ENCODE measurements at regions of chr9 and their contacts with region 1.

Region 1: GRCh38 chr9:88052321-88052965 is 78.1 kb upstream of the CDK20 start:
- DNase-seq: no peak
- ATAC-seq: no peak
- H3K4me3 Mint-ChIP-seq: no peak overlapping the region
- H3K27ac Mint-ChIP-seq: no peak overlapping the region
- H3K4me1 Mint-ChIP-seq: peaks cover 15% of the 10 kb centered on the region
- H3K27me3 Mint-ChIP-seq: peaks cover 12% of the 10 kb centered on the region

Region 2: DNA sequence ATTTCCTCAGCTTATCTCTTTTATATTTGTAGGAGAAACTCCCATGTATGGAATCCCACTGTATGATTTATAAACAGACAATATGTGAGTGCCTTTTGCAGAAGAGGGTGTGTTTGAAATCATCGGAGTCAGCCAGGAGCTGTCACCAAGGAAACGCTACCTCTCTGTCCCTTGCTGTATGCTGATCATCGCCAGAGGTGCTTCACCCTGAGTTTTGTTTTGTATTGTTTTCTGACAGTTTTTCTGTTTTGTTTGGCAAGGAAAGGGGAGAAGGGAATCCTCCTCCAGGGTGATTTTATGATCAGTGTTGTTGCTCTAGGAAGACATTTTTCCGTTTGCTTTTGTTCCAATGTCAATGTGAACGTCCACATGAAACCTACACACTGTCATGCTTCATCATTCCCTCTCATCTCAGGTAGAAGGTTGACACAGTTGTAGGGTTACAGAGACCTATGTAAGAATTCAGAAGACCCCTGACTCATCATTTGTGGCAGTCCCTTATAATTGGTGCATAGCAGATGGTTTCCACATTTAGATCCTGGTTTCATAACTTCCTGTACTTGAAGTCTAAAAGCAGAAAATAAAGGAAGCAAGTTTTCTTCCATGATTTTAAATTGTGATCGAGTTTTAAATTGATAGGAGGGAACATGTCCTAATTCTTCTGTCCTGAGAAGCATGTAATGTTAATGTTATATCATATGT is 344.5 kb before region 1 on chr9:
- CTCF ChIA-PET with region 1: no interaction called
- POLR2A ChIA-PET with region 1: no interaction called
- intact Hi-C with region 1: loop called in 1 of 2 experiments (anchors 2 kb)
- DNase-seq: peak; percentile 31
- ATAC-seq: peak; percentile 40
- H3K4me3 Mint-ChIP-seq: no peak overlapping the region
- H3K27ac Mint-ChIP-seq: no peak overlapping the region
- H3K4me1 Mint-ChIP-seq: peaks cover 44% of the 10 kb centered on the region
- H3K27me3 Mint-ChIP-seq: peaks cover 5% of the 10 kb centered on the region

Region 3: GRCh38 chr9:87973730-87974292 is 78.6 kb before region 1 on chr9:
- CTCF ChIA-PET with region 1: interaction called, 4 read pairs
- POLR2A ChIA-PET with region 1: interaction called, 4 read pairs
- intact Hi-C with region 1: loop called in 1 of 2 experiments (anchors 1 kb)
- DNase-seq: peak; percentile 19
- ATAC-seq: no peak
- H3K4me3 Mint-ChIP-seq: peak overlapping the region; percentile 82
- H3K27ac Mint-ChIP-seq: peak overlapping the region; percentile 58
- H3K4me1 Mint-ChIP-seq: peaks cover 22% of the 10 kb centered on the region
- H3K27me3 Mint-ChIP-seq: no peaks in the 10 kb centered on the region

Region 4: GRCh38 chr9:88076286-88077090 is 24.0 kb after region 1 on chr9:
- CTCF ChIA-PET with region 1: no interaction called
- POLR2A ChIA-PET with region 1: no interaction called
- intact Hi-C with region 1: no loop called
- DNase-seq: peak; percentile 68
- ATAC-seq: peak; percentile 72
- H3K4me3 Mint-ChIP-seq: peak overlapping the region; percentile 66
- H3K27ac Mint-ChIP-seq: no peak overlapping the region
- H3K4me1 Mint-ChIP-seq: peaks cover 6% of the 10 kb centered on the region
- H3K27me3 Mint-ChIP-seq: peaks cover 49% of the 10 kb centered on the region

Region 5: DNA sequence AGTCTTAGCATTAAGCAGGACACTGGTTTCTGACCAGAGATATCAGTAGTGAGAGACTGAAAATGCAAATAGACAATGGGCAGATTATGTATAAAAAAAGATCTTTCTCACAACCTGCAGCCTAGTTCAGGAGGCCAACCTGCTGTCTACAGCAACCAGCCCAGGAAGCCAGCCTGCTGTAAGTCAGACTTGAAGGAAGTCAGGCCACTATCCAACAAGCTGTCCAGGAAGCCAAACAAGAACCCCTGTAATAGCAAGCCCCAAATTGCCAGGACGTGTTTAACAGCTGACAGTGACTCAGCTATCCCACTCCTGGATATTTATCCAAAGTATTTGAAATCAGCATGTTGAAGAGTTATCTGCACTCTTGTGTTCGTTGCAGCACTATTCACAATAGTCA is 214.0 kb after region 1 on chr9:
- CTCF ChIA-PET with region 1: no interaction called
- POLR2A ChIA-PET with region 1: no interaction called
- intact Hi-C with region 1: no loop called
- DNase-seq: no peak
- ATAC-seq: no peak
- H3K4me3 Mint-ChIP-seq: no peak overlapping the region
- H3K27ac Mint-ChIP-seq: no peak overlapping the region
- H3K4me1 Mint-ChIP-seq: peaks cover 3% of the 10 kb centered on the region
- H3K27me3 Mint-ChIP-seq: no peaks in the 10 kb centered on the region

Region 6: DNA sequence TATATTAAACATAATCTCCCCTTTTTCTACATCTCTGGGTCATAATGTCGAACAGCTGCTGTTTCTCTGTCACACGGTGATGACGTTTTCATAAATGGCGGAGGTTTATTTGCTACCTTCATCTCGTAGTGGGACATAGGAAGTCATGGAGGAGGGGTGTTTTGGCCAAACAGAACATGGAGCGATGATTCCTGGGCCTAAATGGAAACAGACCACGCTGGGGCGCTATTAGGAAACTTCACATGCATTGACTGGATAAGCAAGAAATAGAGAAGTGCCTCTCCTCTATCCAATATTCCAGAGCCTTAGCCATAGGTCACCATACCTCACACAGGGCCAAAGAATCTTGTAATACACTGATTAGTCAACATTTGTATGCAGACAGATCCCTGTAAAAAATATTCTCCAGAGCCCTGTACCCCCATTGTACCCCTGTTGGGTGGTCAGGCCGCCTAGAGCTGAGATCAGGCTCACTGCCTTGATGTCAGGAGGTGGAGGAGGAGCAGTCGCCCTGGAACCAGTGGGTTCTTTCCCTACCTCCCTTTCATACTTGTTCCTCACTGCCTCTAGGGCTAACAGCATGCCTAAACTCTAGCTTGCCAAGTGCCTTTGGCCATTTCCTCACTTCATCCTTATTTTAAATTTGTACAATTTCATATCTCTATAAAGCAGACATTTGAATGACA is 258.0 kb after region 1 on chr9:
- CTCF ChIA-PET with region 1: no interaction called
- POLR2A ChIA-PET with region 1: no interaction called
- intact Hi-C with region 1: loop called in 1 of 2 experiments (anchors 2 kb)
- DNase-seq: no peak
- ATAC-seq: no peak
- H3K4me3 Mint-ChIP-seq: no peak overlapping the region
- H3K27ac Mint-ChIP-seq: peak overlapping the region; percentile 25
- H3K4me1 Mint-ChIP-seq: peaks cover 31% of the 10 kb centered on the region
- H3K27me3 Mint-ChIP-seq: peaks cover 6% of the 10 kb centered on the region

Region 7: GRCh38 chr9:88339317-88339716 is 286.9 kb after region 1 on chr9:
- CTCF ChIA-PET with region 1: no interaction called
- POLR2A ChIA-PET with region 1: no interaction called
- intact Hi-C with region 1: no loop called
- DNase-seq: no peak
- ATAC-seq: no peak
- H3K4me3 Mint-ChIP-seq: no peak overlapping the region
- H3K27ac Mint-ChIP-seq: no peak overlapping the region
- H3K4me1 Mint-ChIP-seq: no peaks in the 10 kb centered on the region
- H3K27me3 Mint-ChIP-seq: no peaks in the 10 kb centered on the region